RWPE1 (cell line): ENCODE measurements at regions of chr6 and their contacts with region 1.

Region 1: DNA sequence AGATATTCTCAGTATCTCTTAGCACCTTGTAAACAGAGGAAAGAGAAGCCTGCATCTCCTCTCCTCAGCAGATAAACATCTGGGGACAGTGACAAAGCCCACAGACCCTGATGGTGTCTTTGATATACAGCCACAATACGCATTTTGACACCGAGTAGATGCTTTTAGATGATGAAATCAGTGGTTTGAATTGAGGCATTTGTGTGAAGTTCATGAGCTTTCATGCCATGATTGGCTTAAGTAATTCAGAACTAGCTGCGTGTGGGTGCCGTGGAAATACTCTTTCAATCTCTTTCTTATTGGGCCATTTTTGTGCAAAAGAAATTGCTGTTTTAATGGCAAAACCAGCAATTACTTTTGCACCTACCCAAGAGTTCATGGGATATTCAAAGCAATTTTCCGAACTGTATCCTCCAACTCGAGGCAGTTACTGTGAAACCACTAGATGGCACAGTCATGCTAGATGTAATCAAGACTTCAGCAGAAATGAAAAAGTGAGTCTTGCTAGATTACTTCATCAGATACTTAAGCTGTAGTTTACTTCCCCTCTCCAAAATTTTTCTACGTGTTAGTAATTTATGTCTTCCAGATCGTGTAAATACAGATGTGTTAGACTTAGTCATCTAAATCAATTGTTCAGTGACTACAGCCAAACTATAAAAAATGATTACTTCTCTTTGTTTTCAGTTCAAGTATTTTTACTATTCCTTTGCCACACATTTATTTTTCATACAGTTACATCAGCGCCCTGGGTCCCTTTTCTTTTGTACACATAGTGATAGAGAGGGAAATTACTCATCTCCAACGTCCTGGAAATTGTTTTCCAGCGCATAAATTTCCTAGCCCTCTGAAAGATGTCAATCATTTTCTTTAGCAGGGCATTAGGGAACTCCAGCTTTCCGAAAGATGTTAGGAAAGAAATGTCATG is 49.4 kb downstream of the IYD start:
- DNase-seq: peak; percentile 83
- H3K27ac ChIP-seq: peak overlapping the region; percentile 72
- CTCF ChIP-seq: peak; percentile 86

Region 2: DNA sequence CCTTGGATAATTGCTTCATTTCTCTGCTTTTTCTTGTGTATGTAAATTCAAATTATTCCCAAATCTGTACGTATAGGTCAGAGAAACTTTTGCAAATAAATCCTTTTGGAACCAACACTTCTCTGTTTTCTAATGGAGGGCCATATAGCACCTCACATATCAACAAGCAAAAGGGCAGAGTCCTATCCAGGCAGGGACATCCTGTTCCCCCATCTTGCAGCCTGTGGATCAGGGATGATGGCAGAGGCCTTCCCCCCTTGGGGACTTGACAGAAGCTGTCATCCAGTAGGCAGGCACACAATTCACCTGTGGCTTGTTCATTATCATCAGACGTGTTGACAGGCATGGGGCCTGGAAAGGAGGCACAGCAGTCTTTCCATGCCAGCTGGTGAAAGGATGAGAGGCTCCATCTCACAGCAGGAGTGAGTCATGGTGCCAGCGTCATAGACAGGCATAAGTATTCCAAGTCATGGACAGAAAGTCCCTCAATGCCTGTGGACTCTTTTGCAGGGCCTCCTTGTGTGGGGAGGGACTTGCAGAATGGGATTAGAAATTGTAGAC is 149.7 kb after region 1 on chr6:
- CTCF ChIA-PET with region 1: no interaction called
- POLR2A ChIA-PET with region 1: no interaction called
- DNase-seq: no peak
- H3K27ac ChIP-seq: no peak overlapping the region
- CTCF ChIP-seq: no peak

Region 3: DNA sequence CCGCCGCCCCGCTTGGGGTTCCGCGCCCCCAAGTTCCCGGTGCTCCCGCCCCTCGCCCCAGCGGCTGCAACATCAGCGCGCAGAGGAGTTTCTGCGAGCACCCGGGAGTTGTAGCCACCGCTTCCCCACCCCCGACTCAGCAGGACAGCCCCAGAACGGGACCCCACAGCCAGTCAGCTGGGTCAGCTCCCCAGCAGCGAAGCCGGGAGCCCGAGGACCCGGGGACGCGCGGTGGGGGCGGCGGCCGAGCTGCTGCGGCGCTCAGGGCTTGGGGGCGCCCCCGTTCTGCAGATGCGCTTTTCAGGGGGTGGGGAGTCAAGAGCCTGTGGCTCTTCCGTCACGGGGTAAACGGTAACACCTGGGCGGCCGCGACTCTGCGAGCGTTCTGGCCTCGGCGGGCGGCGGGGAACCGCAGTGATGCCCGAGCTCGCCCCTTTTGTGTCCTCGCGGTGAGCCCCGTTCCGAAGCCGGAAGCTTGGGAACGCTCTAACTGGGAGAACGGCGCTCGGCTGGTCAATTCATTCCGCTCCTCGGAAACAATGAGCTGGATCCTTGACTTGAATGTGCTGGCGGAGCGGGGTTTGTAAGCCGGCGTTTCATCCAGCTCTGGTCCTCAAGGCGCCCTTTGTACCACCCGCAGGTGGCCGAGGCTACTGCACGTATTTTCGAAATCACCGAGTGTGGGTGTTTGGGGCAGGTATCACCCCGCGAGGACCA is 182.3 kb after region 1 on chr6:
- CTCF ChIA-PET with region 1: interaction called, 12 read pairs
- POLR2A ChIA-PET with region 1: no interaction called
- DNase-seq: peak; percentile 86
- H3K27ac ChIP-seq: no peak overlapping the region
- CTCF ChIP-seq: peak; percentile 36